Heart right ventricle (tissue), 16 donors: ENCODE measurements at regions of chr11 and their contacts with region 1.

Region 1: GRCh38 chr11:39668640-39669039 is 1790.8 kb downstream of the LRRC4C start:
- DNase-seq: no peak
- ATAC-seq: no peak
- H3K4me3 ChIP-seq: no peak overlapping the region
- H3K27ac ChIP-seq: no peak overlapping the region
- H3K4me1 ChIP-seq: no peaks in the 10 kb centered on the region
- H3K27me3 ChIP-seq: no peaks in the 10 kb centered on the region
- CTCF ChIP-seq: no peak

Region 2: DNA sequence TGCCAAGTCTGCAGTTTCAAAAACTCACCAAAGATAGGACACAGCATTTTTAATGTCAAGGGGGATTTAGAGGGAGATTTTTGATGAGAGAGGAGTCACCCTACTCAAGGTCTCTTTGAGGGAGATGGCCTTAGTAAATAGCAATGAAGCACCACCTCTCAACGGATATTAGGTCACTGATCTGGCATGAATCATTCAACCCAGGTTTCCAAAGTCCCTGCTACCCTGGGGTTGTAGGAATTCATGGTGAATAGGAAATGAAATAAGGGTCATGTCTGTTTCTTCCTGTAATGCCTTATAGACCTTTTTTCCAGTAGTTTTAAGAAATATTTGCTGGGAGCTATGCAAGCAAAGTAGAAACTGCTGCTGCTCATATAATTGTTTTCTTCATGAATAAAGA is 364.1 kb before region 1 on chr11:
- intact Hi-C with region 1: no loop called
- DNase-seq: no peak
- ATAC-seq: no peak
- H3K4me3 ChIP-seq: no peak overlapping the region
- H3K27ac ChIP-seq: no peak overlapping the region
- H3K4me1 ChIP-seq: peaks cover 0 to 6% (median 0%) of the 10 kb centered on the region in 9 donors
- H3K27me3 ChIP-seq: no peaks in the 10 kb centered on the region
- CTCF ChIP-seq: no peak

Region 3: GRCh38 chr11:39365809-39366436 is 302.7 kb before region 1 on chr11:
- intact Hi-C with region 1: no loop called
- DNase-seq: no peak
- ATAC-seq: no peak
- H3K4me3 ChIP-seq: no peak overlapping the region
- H3K27ac ChIP-seq: no peak overlapping the region
- H3K4me1 ChIP-seq: no peaks in the 10 kb centered on the region
- H3K27me3 ChIP-seq: no peaks in the 10 kb centered on the region
- CTCF ChIP-seq: peak in 6 of 9 donors; percentile 14 to 52 (median 24)

Region 4: GRCh38 chr11:39628311-39628710 is 40.3 kb before region 1 on chr11:
- intact Hi-C with region 1: loop called in 1 of 10 experiments (anchors 5 kb)
- DNase-seq: no peak
- ATAC-seq: no peak
- H3K4me3 ChIP-seq: no peak overlapping the region
- H3K27ac ChIP-seq: no peak overlapping the region
- H3K4me1 ChIP-seq: no peaks in the 10 kb centered on the region
- H3K27me3 ChIP-seq: no peaks in the 10 kb centered on the region
- CTCF ChIP-seq: no peak

Region 5: GRCh38 chr11:39712581-39712980 is 43.9 kb after region 1 on chr11:
- intact Hi-C with region 1: no loop called
- DNase-seq: no peak
- ATAC-seq: no peak
- H3K4me3 ChIP-seq: no peak overlapping the region
- H3K27ac ChIP-seq: no peak overlapping the region
- H3K4me1 ChIP-seq: no peaks in the 10 kb centered on the region
- H3K27me3 ChIP-seq: no peaks in the 10 kb centered on the region
- CTCF ChIP-seq: no peak

Region 6: GRCh38 chr11:41486424-41486823 is 1817.8 kb after region 1 on chr11:
- intact Hi-C with region 1: loop called in 1 of 10 experiments (anchors 5 kb)
- DNase-seq: no peak
- ATAC-seq: no peak
- H3K4me3 ChIP-seq: no peak overlapping the region
- H3K27ac ChIP-seq: no peak overlapping the region
- H3K4me1 ChIP-seq: no peaks in the 10 kb centered on the region
- H3K27me3 ChIP-seq: no peaks in the 10 kb centered on the region
- CTCF ChIP-seq: no peak